ENCODE measurements at regions of chr16 and their contacts with region 1.

Region 1: GRCh38 chr16:58494981-58495520 is 4.9 kb upstream of the NDRG4 start:
- DNase-seq: peak; percentile 80 to 97 (median 93)
- H3K4me3 ChIP-seq: peak overlapping the region in 1 of 3 donors; percentile 17
- H3K27ac ChIP-seq: no peak overlapping the region
- H3K4me1 ChIP-seq: no peaks in the 10 kb centered on the region
- H3K27me3 ChIP-seq: no peaks in the 10 kb centered on the region
- CTCF ChIP-seq: peak; percentile 13

Region 2: DNA sequence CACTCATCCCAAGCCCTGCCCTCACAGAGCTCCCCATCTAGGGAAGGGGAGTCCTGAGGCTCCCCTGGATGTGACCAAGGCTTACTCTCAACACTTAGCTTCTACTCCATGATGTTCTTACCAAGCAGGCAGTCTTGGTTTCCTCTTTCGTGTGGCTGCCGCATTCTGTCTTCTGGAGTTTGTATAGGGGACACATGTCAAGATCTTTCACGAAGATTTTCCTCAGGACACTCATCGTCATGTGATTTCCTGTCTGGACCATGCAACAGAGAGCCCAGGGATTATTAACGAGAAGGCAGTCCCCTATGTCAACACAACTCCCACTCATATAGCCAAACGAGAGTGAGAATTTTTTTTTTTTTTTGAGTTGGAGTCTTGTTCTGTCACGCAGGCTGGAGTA is 210.6 kb before region 1 on chr16:
- intact Hi-C with region 1: no loop called
- DNase-seq: no peak
- H3K4me3 ChIP-seq: no peak overlapping the region
- H3K27ac ChIP-seq: no peak overlapping the region
- H3K4me1 ChIP-seq: no peaks in the 10 kb centered on the region
- H3K27me3 ChIP-seq: no peaks in the 10 kb centered on the region
- CTCF ChIP-seq: no peak

Region 3: DNA sequence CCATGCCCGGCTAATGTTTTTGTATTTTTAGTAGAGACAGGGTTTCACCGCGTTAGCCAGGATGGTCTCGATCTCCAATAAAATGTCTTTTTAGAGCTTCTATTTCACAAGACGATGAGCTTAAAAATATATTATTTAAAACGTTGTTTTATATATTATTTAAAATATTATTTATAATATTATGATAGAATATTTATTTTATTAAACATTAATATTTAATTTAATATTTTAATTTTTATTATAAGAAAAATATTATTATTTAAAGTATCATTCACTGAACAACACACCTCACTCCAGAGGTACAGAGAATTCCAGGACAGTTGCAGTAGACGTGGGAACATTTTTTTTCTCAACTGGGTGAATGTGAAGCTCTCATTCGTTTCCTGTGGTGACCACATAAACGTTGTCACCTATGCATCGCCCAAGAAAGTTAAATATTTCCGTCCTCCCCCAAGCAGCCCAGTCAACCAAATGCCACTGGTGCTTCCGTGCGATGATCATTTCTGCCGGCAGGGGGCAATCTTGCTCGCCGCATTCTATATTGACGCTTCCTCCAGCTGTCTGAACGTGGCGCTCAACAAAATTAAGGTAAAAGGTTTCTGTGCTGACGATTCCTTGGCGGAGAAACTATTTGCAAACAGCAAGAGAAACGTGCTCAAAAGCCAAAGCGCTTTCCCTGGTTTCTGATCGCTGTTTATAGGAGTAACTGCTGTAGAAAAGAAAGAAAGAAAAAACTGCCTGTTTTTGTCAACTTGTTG is 158.5 kb before region 1 on chr16:
- intact Hi-C with region 1: loop called (anchors 5 kb)
- DNase-seq: peak; percentile 85 to 93 (median 92)
- H3K4me3 ChIP-seq: peak overlapping the region; percentile 5 to 59 (median 57)
- H3K27ac ChIP-seq: no peak overlapping the region
- H3K4me1 ChIP-seq: peaks cover 0 to 2% (median 0%) of the 10 kb centered on the region in 3 donors
- H3K27me3 ChIP-seq: no peaks in the 10 kb centered on the region
- CTCF ChIP-seq: peak; percentile 84

Region 4: GRCh38 chr16:58392215-58393137 is 102.6 kb before region 1 on chr16 and contains the start of gene GINS3:
- intact Hi-C with region 1: no loop called
- DNase-seq: peak; percentile 90 to 96 (median 92)
- H3K4me3 ChIP-seq: peak within 1 kb of the TSS; percentile 94 to 97 (median 96)
- H3K27ac ChIP-seq: peak within 1 kb of the TSS; percentile 18 to 51
- H3K4me1 ChIP-seq: no peaks in the 10 kb centered on the region
- H3K27me3 ChIP-seq: peaks cover 2% of the 10 kb centered on the region
- CTCF ChIP-seq: no peak
- total RNA-seq, gene GINS3: 2.6 TPM